ENCODE measurements at regions of chr16 and their contacts with region 1.

Region 1: GRCh38 chr16:70529051-70529777 is 5.6 kb downstream of the SF3B3 start:
- DNase-seq: no peak
- ATAC-seq: peak; percentile 34
- H3K4me3 ChIP-seq: peak overlapping the region; percentile 43
- H3K27ac ChIP-seq: no peak overlapping the region
- H3K4me1 ChIP-seq: peaks cover 5% of the 10 kb centered on the region; the same call in 1 of the 2 replicates
- H3K27me3 ChIP-seq: no peaks in the 10 kb centered on the region
- CTCF ChIP-seq: peak; percentile 36 to 44 (median 42); a peak in 5 of 6 replicates
- EP300 ChIP-seq: no peak
- POLR2A ChIP-seq: no peak
- RAD21 ChIP-seq: peak; percentile 24; the same call in 1 of the 2 replicates

Region 2: GRCh38 chr16:70478912-70479341 is 50.3 kb before region 1 on chr16:
- CTCF ChIA-PET with region 1: interaction called, 5 read pairs
- POLR2A ChIA-PET with region 1: interaction called, 10 read pairs
- RAD21 ChIA-PET with region 1: interaction called, 4 read pairs
- SMC1A ChIA-PET with region 1: interaction called, 6 read pairs
- in situ Hi-C with region 1: no loop called
- intact Hi-C with region 1: no loop called
- DNase-seq: no peak
- ATAC-seq: no peak
- H3K4me3 ChIP-seq: no peak overlapping the region
- H3K27ac ChIP-seq: no peak overlapping the region
- H3K4me1 ChIP-seq: peaks cover 35% of the 10 kb centered on the region
- H3K27me3 ChIP-seq: no peaks in the 10 kb centered on the region
- CTCF ChIP-seq: no peak
- EP300 ChIP-seq: no peak
- POLR2A ChIP-seq: 0 out of 2 replicates have a peak, but pooled peaks have one; percentile 4
- RAD21 ChIP-seq: no peak

Region 3: DNA sequence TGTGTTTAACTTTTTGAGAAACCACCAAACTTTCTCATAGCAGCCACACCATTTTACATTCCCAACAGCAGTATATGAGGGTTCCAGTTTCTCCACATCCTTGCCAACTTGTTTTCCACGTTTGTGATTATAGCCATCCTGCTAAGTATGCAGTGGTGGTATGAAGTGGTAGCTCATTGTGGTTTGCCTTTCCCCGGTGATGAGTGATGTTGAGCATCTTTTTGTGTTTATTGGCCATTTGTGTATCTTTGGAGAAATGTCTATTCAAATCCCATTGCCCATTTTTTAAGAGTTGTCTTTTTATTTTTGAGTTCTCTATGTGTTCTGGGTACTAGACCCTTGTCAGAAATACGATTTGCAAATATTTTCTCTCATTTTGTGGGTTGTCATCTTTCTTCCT is 11.8 kb after region 1 on chr16:
- CTCF ChIA-PET with region 1: interaction called, 4 read pairs
- POLR2A ChIA-PET with region 1: interaction called, 4 read pairs
- RAD21 ChIA-PET with region 1: interaction called, 3 read pairs
- SMC1A ChIA-PET with region 1: interaction called, 10 read pairs
- in situ Hi-C with region 1: no loop called
- intact Hi-C with region 1: no loop called
- DNase-seq: no peak
- ATAC-seq: no peak
- H3K4me3 ChIP-seq: no peak overlapping the region
- H3K27ac ChIP-seq: no peak overlapping the region
- H3K4me1 ChIP-seq: no peaks in the 10 kb centered on the region
- H3K27me3 ChIP-seq: no peaks in the 10 kb centered on the region
- CTCF ChIP-seq: no peak
- EP300 ChIP-seq: no peak
- POLR2A ChIP-seq: no peak
- RAD21 ChIP-seq: no peak

Region 4: DNA sequence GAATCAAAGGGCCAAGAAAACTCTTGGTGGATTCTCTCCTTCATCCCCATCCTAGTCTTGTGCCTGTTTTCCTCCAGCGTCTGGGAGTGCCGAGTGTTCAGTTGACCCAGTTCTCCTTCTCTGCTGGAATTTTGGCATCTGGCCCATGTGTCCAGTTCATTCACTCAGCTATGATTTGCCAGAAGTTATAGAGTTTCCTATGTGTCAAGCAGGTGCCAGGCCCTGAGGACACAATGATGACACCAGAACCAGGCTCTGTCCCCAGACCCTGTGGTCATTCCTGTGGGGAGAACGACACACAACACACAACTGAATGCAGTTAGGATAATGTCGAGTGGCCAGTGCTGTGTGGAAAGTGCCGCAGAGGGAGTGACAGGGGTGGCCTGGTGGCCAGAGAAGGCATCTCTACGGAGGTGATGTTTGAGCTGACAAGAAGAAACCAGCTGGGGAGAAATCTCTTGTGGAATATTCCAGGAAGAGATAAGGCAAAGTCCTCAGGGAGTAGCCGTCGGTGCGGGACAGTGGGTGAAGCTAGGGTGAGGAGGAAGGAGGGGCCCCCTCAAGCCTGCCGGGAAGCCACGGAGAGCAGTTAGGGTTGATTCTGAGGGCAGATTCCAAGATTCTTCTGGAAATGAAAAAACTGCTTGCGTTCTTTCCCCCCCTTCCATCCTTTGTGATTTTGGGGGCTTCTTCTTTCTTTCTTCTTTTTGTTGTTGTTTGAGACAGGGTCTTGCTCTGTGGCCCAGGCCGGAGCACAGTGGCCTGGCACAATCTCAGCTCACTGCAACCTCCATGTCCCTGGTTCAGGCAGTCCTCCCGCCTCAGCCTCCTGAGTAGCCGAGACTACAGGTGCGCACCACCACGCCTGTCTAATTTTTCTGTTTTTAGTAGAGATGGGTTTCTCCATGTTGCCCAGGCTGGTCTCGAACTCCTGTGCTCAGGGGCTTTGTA is 81.3 kb after region 1 on chr16:
- CTCF ChIA-PET with region 1: no interaction called
- POLR2A ChIA-PET with region 1: no interaction called
- RAD21 ChIA-PET with region 1: no interaction called
- SMC1A ChIA-PET with region 1: no interaction called
- in situ Hi-C with region 1: no loop called
- intact Hi-C with region 1: no loop called
- DNase-seq: no peak
- ATAC-seq: no peak; the same call in 2 of the 3 replicates
- H3K4me3 ChIP-seq: no peak overlapping the region
- H3K27ac ChIP-seq: no peak overlapping the region
- H3K4me1 ChIP-seq: no peaks in the 10 kb centered on the region
- H3K27me3 ChIP-seq: no peaks in the 10 kb centered on the region; a peak in 1 of 4 replicates
- CTCF ChIP-seq: no peak
- EP300 ChIP-seq: no peak
- POLR2A ChIP-seq: no peak
- RAD21 ChIP-seq: no peak

Measured in GM12878 (cell line).